ENCODE measurements at regions of chr17 and their contacts with region 1.

Region 1: DNA sequence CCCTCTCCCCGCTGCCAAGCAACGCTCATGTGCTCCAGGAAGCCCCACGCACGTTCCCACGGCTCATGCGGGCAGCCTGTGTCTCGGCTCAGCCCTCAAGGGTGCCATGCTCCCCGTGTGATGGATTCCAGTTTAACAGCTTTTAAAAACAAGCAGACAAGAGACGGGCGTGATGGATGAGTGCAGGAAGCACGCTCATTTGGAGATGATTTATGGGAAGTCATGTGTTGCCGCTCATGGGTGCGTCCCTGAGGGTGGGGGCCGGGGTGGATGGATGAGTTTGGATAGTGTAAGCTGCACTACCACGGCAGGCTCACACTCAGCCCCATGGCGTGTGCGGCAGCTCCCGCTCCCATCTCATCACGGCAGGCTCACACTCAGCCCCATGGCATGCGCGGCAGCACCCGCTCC is 132.8 kb downstream of the RBFOX3 start:
- DNase-seq: no peak
- ATAC-seq: no peak
- H3K4me3 ChIP-seq: no peak overlapping the region
- H3K27ac ChIP-seq: no peak overlapping the region
- H3K4me1 ChIP-seq: peaks cover 6 to 10% of the 10 kb centered on the region in 2 experiments; a peak in 3 of 4 replicates
- H3K27me3 ChIP-seq: peaks cover 26% of the 10 kb centered on the region; the same call in 1 of the 2 replicates
- CTCF ChIP-seq: no peak
- POLR2A ChIP-seq: no peak
- RAD21 ChIP-seq: no peak

Region 2: DNA sequence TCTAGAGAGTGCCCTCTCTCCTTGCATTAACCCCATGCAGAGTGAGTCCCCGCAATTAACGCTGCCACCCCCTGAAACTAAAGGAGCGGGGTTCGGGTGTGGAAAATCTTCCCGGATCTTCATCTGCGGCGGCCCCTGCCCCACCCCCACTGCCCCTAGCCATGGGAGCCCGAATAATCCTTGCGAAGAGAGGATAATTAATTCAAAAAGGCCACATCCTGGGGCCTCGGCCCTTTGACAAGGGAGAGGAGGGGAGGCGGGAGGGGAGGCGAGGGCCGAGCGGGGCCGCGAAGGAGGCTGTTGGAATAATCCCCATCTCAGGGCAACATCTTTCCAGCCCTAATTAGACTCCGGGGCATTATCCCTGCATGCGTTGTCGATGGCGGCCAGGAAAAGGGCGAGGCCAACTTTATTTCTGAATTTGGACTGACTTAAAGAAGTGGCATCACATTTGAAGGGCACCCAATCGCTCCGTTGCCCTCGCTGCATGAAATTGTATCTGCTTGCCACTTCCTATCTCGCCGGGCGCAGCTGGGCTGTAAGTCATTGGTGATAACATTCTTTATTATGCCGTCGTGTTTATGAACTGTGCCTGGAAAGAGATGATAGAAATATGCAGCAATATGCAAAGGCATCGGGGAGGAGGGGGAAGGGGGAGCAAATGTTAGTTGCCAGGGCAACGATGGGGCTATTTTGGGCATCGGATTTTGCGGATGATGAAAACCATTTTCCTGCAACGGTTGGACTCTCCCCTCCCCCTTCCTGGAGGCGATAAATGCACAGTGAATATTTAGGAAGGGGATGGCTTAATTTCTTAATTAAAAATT is 1906.7 kb before region 1 on chr17:
- CTCF ChIA-PET with region 1: no interaction called
- POLR2A ChIA-PET with region 1: no interaction called
- RAD21 ChIA-PET with region 1: no interaction called
- intact Hi-C with region 1: loop called (anchors 10 kb)
- DNase-seq: no peak
- ATAC-seq: no peak
- H3K4me3 ChIP-seq: no peak overlapping the region
- H3K27ac ChIP-seq: no peak overlapping the region
- H3K4me1 ChIP-seq: peaks cover 6 to 10% of the 10 kb centered on the region in 2 experiments; a peak in 2 of 4 replicates
- H3K27me3 ChIP-seq: peaks cover 13% of the 10 kb centered on the region; the same call in 1 of the 2 replicates
- CTCF ChIP-seq: no peak
- POLR2A ChIP-seq: no peak
- RAD21 ChIP-seq: no peak